ENCODE measurements at regions of chr2 and their contacts with region 1.

Region 1: DNA sequence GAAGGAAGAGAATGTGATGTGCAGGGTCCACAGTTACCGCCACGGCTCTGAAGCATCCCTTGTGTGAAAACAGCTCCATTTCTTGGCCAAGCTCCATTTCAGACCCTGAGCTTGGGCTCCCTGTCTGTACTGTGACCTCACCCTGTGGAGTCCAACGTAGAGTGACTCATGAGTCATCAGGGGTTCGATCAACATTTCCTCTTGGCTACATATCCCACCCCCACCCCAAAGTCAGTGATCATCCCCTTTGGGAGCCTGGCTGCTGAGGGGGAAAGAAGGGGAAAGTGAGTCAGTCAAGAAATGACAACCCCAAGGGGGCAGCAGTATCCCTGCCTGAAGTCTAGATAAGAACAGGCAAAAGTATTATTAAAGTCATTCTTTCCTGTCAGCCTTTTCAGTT is 62.2 kb downstream of the PAPOLG start:
- DNase-seq: peak; percentile 76
- ATAC-seq: peak; percentile 60
- H3K4me3 Mint-ChIP-seq: peak overlapping the region; percentile 29
- H3K27ac Mint-ChIP-seq: peak overlapping the region; percentile 82
- H3K4me1 Mint-ChIP-seq: peaks cover 57% of the 10 kb centered on the region
- H3K27me3 Mint-ChIP-seq: no peaks in the 10 kb centered on the region

Region 2: GRCh38 chr2:60806988-60807681 is 11.1 kb before region 1 on chr2:
- CTCF ChIA-PET with region 1: interaction called, 13 read pairs
- POLR2A ChIA-PET with region 1: interaction called, 17 read pairs
- intact Hi-C with region 1: loop called in 1 of 2 experiments (anchors 1 kb)
- DNase-seq: peak; percentile 83
- ATAC-seq: peak; percentile 92
- H3K4me3 Mint-ChIP-seq: peak overlapping the region; percentile 41
- H3K27ac Mint-ChIP-seq: peak overlapping the region; percentile 86
- H3K4me1 Mint-ChIP-seq: peaks cover 53% of the 10 kb centered on the region
- H3K27me3 Mint-ChIP-seq: no peaks in the 10 kb centered on the region

Region 3: DNA sequence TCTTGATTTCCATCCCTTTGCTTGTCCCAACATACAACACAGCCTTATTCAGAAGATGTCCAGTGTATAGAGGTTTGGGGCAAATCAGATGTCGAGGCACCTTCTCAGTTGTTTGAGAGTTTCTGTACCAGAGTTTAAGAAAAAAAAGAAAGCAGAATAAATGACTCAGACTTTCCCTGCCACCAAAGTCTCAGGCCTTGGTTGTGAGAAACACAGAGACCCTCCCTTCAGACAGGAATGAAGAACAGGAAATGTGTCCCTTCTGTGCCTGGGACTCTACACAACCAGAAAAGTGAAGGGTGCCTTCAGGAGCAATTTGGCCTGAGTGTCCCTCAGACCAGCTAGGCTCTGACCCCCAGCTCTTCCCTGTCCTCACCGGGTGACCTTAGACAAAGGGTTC is 25.8 kb after region 1 on chr2:
- CTCF ChIA-PET with region 1: interaction called, 4 read pairs
- POLR2A ChIA-PET with region 1: no interaction called
- intact Hi-C with region 1: loop called in 1 of 2 experiments (anchors 1 kb)
- DNase-seq: peak; percentile 50
- ATAC-seq: peak; percentile 82
- H3K4me3 Mint-ChIP-seq: no peak overlapping the region
- H3K27ac Mint-ChIP-seq: peak overlapping the region; percentile 28
- H3K4me1 Mint-ChIP-seq: peaks cover 26% of the 10 kb centered on the region
- H3K27me3 Mint-ChIP-seq: no peaks in the 10 kb centered on the region

Region 4: GRCh38 chr2:60881047-60881932 is 63.0 kb after region 1 on chr2 and contains the start of gene REL:
- CTCF ChIA-PET with region 1: interaction called, 5 read pairs
- POLR2A ChIA-PET with region 1: interaction called, 9 read pairs
- intact Hi-C with region 1: loop called (anchors 1 kb)
- DNase-seq: peak; percentile 95
- ATAC-seq: peak; percentile 84
- H3K4me3 Mint-ChIP-seq: peak within 1 kb of the TSS; percentile 91
- H3K27ac Mint-ChIP-seq: peak within 1 kb of the TSS; percentile 98
- H3K4me1 Mint-ChIP-seq: peaks cover 25% of the 10 kb centered on the region
- H3K27me3 Mint-ChIP-seq: no peaks in the 10 kb centered on the region
- total RNA-seq, gene REL: 42.7 to 55.9 TPM

Region 5: GRCh38 chr2:60976875-60977561 is 158.7 kb after region 1 on chr2:
- CTCF ChIA-PET with region 1: interaction called, 5 read pairs
- POLR2A ChIA-PET with region 1: no interaction called
- intact Hi-C with region 1: loop called in 1 of 2 experiments (anchors 1 kb)
- DNase-seq: peak; percentile 53
- ATAC-seq: peak; percentile 94
- H3K4me3 Mint-ChIP-seq: peak overlapping the region; percentile 2
- H3K27ac Mint-ChIP-seq: peak overlapping the region; percentile 86
- H3K4me1 Mint-ChIP-seq: peaks cover 44% of the 10 kb centered on the region
- H3K27me3 Mint-ChIP-seq: no peaks in the 10 kb centered on the region

Measured in activated CD4-positive, alpha-beta T cell treated with anti-CD3 and anti-CD28 coated beads for 36 hours (primary cell).